Thyroid gland (tissue), 4 donors: ENCODE measurements at regions of chr20 and their contacts with region 1.

Region 1: DNA sequence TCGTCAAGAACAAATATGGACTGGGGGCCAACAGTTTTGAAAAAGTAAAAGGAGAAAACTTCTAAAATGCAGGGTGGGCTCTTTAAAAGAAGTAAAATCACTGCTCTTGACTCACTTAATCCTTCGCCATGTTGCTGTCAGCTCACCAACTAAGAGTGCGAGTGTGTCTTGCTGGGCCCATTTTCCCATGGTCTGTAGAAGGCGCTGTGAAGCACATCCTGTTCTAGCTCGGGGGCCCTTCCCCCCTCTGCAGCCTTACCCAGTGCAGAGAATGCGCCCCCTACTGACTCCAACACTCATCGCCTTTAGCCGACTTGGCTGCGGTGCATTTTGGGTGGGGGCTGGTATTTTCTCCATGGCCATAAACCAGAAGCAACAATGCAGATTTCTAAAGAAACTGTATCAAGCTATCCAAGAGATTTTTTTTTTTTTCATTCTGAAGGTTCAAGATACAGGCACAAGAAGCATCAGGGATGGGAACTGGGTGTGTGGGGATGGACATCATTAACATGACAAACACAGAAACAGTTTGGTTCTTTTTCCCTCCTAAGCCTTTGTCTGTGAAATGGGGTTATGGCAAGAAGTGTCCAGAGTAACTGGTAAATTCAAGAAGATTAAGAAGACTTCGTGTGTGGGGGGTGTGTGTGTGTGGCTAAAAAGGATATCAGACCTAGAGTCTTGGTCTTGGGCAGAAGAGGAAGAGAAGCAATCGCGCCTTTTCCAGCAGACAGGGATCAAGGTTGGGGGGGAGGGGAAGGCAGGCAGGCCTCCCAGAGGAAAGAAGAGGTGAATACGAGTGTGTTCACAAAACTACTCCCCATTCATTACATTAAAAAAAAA is 1.7 kb downstream of the ADNP start:
- DNase-seq: peak; percentile 93 to 94
- H3K4me3 ChIP-seq: peak overlapping the region in 2 of 3 donors; percentile 84 to 85
- H3K27ac ChIP-seq: peak overlapping the region; percentile 54 to 84 (median 80)
- H3K4me1 ChIP-seq: peaks cover 27 to 31% of the 10 kb centered on the region in 2 donors
- H3K27me3 ChIP-seq: no peaks in the 10 kb centered on the region
- CTCF ChIP-seq: peak; percentile 51 to 96 (median 90)
- POLR2A ChIP-seq: no peak

Region 2: GRCh38 chr20:50790651-50791277 is 138.8 kb before region 1 on chr20:
- intact Hi-C with region 1: loop called (anchors 5 kb)
- DNase-seq: peak; percentile 93 to 95
- H3K4me3 ChIP-seq: no peak overlapping the region
- H3K27ac ChIP-seq: peak overlapping the region; percentile 79 to 87 (median 87)
- H3K4me1 ChIP-seq: peaks cover 4 to 21% of the 10 kb centered on the region in 2 donors
- H3K27me3 ChIP-seq: no peaks in the 10 kb centered on the region
- CTCF ChIP-seq: peak; percentile 42 to 88 (median 76)
- POLR2A ChIP-seq: peak in 1 of 2 donors; percentile 50

Region 3: DNA sequence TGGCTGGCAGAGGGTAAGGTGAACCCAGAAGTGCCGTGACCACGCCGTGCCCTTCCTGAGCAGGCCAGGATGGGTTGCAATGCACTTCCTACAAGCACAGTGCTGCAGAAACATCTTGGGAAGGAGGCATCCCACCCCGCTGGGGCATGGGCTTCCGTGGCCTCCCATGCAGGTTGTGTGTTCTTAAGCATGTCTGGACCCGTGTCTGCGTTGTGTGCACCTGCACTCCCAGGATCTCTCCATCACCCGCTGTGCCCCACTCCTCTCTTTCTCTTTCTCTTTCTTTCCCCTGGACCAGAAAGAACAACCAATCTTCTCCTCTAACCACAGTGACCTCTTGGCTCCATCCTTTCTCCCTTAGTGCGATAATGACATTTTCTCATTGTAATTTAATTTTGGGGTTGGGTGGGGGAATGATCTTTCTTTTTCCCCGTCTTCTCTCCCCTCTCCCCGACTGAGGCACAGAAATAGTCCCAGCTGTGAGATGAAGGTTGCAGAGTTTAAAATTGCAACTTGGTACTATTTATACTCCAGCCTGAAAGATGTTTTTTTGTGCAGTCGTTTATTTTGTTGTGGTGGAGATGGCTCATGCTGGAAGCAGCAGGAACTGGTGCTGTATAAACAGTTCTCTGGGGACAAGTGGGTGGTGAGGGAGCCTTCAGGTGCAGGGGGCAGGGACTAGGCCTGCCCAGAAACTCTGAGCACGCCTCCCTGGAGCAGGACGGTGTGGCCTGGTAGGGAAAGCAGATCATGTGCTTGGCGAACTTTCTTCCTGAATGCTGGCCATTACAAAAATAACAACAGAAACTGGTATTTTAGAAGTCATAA is 114.1 kb before region 1 on chr20:
- intact Hi-C with region 1: loop called (anchors 5 kb)
- DNase-seq: peak; percentile 94
- H3K4me3 ChIP-seq: no peak overlapping the region
- H3K27ac ChIP-seq: peak overlapping the region; percentile 87 to 93 (median 87)
- H3K4me1 ChIP-seq: peaks cover 13 to 22% of the 10 kb centered on the region in 2 donors
- H3K27me3 ChIP-seq: no peaks in the 10 kb centered on the region
- CTCF ChIP-seq: no peak
- POLR2A ChIP-seq: peak in 1 of 2 donors; percentile 53

Region 4: DNA sequence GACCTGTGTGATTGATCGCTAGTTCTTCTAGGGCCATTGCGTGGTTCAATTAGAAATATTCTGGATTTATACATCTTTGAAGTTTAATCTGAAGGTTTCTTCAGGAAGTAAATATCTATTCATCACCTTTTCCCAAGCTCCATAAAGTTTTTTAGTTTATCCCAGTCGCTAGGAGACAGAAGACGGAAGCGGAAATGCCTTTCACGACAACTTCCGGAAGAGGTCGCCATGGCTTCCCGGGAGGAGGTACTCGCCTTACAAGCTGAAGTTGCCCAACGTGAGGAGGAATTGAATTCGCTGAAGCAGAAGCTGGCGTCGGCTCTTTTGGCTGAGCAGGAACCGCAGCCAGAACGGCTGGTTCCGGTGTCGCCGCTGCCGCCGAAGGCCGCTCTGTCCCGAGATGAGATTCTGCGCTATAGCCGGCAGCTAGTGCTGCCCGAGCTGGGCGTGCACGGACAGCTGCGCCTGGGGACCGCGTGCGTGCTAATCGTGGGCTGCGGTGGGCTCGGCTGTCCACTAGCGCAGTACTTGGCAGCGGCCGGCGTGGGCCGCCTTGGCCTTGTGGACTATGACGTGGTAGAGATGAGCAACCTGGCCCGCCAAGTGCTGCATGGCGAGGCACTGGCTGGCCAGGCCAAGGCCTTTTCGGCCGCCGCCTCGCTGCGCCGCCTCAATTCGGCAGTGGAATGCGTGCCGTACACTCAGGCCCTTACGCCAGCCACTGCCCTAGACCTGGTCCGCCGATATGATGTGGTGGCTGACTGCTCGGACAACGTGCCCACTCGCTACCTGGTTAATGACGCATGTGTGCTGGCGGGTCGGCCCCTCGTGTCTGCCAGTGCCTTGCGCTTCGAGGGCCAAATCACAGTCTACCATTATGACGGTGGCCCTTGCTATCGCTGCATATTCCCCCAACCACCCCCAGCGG is 29.4 kb after region 1 on chr20 and contains the start of gene MOCS3:
- intact Hi-C with region 1: loop called (anchors 2 kb)
- DNase-seq: peak; percentile 78 to 80
- H3K4me3 ChIP-seq: peak within 1 kb of the TSS; percentile 82 to 99 (median 86)
- H3K27ac ChIP-seq: peak within 1 kb of the TSS; percentile 84 to 95 (median 90)
- H3K4me1 ChIP-seq: peaks cover 21 to 24% of the 10 kb centered on the region in 2 donors
- H3K27me3 ChIP-seq: no peaks in the 10 kb centered on the region
- CTCF ChIP-seq: no peak
- POLR2A ChIP-seq: peak in 1 of 2 donors; percentile 38
- total RNA-seq, gene MOCS3: 6.7 to 7.8 (median 7.6) TPM